Aorta (tissue), 5 donors: ENCODE measurements at regions of chr22 and their contacts with region 1.

Region 1: DNA sequence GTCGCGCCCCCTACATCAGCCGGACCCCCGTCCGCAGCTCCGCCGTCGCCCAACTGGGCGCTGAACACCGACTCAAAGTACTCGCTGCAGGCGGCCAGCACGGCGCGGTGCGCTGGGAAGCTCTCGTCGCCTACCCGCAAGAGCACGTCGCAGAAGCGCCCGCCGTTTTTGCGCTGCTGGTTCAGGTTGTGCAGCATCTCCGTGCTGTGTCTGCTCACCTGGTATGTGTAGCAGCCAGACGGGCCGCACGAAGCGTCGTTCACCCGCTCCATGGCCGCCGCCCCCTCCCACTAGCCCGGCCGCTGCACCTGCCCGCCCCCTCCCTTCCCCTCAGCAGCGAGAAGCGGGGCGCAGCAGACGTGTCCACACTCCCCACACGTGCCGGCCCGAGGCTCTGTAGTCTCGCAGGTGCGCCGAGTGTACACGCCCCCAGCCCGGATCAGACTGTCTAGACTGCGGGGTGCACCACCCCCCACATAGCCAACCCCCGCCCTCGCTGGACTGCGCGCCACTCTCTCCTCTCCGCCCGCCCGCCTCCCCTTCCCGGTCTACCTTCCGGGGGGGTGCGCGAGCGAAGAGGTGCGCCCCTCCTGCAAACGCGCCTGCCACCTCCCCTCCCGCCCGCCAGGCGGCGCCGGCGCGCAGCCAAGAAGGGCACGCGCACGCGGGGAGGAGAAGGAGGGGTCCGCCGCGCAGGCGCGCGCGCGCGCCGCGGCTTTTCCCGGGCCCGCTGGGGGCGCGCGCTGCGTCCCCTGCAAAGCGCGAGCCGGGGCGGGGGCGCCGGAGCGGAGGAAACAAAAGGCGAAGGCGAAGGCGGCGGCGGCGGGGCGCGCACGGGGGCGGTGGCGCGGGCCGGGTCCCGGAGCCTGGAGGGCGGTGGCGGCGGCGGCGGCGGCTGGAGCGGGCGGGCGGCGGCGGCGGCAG is 553 bp downstream of the PATZ1 start:
- DNase-seq: peak; percentile 88 to 94
- ATAC-seq: peak; percentile 84
- H3K4me3 ChIP-seq: peak overlapping the region; percentile 66 to 94
- H3K27ac ChIP-seq: peak overlapping the region in 1 of 2 donors; percentile 33
- H3K4me1 ChIP-seq: peaks cover 0 to 3% of the 10 kb centered on the region in 2 donors
- H3K27me3 ChIP-seq: no peaks in the 10 kb centered on the region

Region 2: DNA sequence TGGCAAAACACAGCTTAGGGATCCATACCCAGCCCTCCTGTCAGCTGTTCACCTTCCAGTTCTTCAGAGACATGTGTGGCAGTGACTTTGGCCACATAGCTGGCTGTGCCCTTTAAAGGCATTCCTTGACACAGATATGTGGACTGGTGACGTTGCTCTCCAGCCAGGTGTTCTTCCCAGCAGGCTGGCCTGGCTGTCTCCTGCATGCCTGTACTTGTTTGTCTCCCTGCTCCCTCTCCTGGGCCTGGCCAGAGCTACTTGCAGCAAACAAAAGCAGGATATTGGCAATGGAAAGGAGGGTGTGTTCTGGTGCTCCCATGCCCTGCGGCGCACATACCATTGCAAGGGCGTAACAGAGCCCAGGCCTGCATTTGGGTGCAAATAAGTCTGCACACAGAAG is 91.6 kb before region 1 on chr22:
- intact Hi-C with region 1: no loop called
- DNase-seq: no peak
- ATAC-seq: no peak
- H3K4me3 ChIP-seq: no peak overlapping the region
- H3K27ac ChIP-seq: no peak overlapping the region
- H3K4me1 ChIP-seq: no peaks in the 10 kb centered on the region
- H3K27me3 ChIP-seq: no peaks in the 10 kb centered on the region

Region 3: GRCh38 chr22:31290494-31291471 is 54.8 kb before region 1 on chr22:
- intact Hi-C with region 1: no loop called
- DNase-seq: peak; percentile 97
- ATAC-seq: peak; percentile 96
- H3K4me3 ChIP-seq: peak overlapping the region; percentile 67 to 73
- H3K27ac ChIP-seq: peak overlapping the region; percentile 40 to 75
- H3K4me1 ChIP-seq: no peaks in the 10 kb centered on the region
- H3K27me3 ChIP-seq: no peaks in the 10 kb centered on the region

Region 4: GRCh38 chr22:31399211-31400028 is 53.8 kb after region 1 on chr22 and contains the start of gene DRG1:
- intact Hi-C with region 1: loop called in 1 of 2 experiments (anchors 2 kb)
- DNase-seq: peak; percentile 98 to 99
- ATAC-seq: peak; percentile 99
- H3K4me3 ChIP-seq: peak within 1 kb of the TSS; percentile 55 to 62
- H3K27ac ChIP-seq: peak within 1 kb of the TSS in 1 of 2 donors; percentile 58
- H3K4me1 ChIP-seq: no peaks in the 10 kb centered on the region
- H3K27me3 ChIP-seq: no peaks in the 10 kb centered on the region
- total RNA-seq, gene DRG1: 34.4 to 37.2 TPM

Region 5: GRCh38 chr22:31520051-31520450 is 174.5 kb after region 1 on chr22:
- intact Hi-C with region 1: no loop called
- DNase-seq: no peak
- ATAC-seq: no peak
- H3K4me3 ChIP-seq: no peak overlapping the region
- H3K27ac ChIP-seq: no peak overlapping the region
- H3K4me1 ChIP-seq: no peaks in the 10 kb centered on the region
- H3K27me3 ChIP-seq: no peaks in the 10 kb centered on the region